ENCODE measurements at regions of chr10 and their contacts with region 1.

Region 1: DNA sequence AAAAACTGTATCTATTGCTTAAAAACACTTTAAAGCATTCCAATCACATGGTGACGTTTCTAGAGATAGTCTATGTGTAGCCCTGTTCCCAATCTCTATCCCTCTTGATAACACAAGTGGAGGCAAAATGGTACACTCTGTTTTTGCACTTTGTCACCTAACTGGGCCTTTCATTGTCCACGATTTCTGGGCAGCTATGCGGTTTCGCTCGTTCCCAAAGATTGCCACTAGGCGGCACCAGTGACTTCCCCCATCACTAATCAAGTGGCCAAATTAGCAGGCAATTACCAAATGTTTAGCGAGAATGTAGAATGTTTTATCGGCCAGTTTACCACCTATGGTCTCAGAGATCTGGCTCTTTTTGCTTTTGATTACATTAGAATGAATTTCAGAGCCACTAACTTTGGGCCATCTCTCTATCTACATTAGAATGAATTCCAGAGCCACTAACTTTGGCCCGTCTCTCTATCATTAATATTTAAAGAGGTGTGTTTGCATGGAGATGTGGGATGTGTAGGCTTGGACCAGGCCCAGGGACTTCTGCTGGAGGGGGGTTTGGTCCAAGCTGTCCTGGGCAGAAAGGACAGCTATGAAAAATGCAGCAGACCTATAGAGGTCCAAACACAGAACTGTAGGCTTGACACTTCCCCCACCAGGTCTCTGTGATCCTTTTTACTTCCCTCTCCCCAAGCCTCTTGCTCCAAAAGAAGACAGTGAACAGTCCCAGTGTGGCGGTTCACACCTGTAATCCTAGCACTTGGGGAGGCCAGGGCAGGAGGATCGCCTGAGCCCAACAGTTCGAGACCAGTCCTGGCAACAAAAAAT is 90.1 kb downstream of the EPC1 start:
- DNase-seq: peak; percentile 85
- H3K4me3 ChIP-seq: peak overlapping the region in 1 of 8 donors; percentile 24
- H3K27ac ChIP-seq: no peak overlapping the region
- H3K4me1 ChIP-seq: peaks cover 0 to 13% (median 9%) of the 10 kb centered on the region in 6 donors
- H3K27me3 ChIP-seq: no peaks in the 10 kb centered on the region
- CTCF ChIP-seq: peak; percentile 77 to 93 (median 88)
- POLR2A ChIP-seq: no peak

Region 2: DNA sequence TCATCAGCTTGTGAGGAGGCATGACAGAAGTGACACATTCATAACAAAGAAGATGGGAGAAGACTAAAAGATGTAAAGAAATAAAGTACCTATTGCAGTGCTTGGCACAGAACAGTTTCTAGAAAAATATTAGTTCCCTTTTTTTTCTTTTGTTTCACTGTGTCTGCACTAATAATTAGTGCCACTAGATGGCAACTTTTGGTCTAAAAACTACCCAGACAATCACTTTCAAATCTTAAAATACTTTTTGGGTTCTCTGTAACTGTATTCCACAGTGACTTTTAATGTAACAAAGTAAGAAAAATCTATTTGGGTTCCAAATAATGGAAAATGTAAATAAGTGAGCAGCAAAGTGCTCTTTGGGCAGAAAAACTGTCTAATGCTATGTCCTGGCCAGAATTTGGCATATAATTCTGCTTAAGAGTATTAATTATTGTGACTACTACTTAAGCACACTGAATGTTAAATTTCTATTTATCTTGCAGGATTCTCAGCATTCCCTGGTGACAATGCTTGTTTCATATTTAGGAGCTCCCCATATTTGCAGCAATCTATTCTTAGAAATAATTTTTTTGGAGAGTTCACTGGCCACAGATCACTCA is 65.8 kb before region 1 on chr10:
- intact Hi-C with region 1: no loop called
- DNase-seq: no peak
- H3K4me3 ChIP-seq: no peak overlapping the region
- H3K27ac ChIP-seq: no peak overlapping the region
- H3K4me1 ChIP-seq: peaks cover 0 to 19% (median 7%) of the 10 kb centered on the region in 6 donors
- H3K27me3 ChIP-seq: no peaks in the 10 kb centered on the region
- CTCF ChIP-seq: peak; percentile 51 to 79 (median 72)
- POLR2A ChIP-seq: no peak

Region 3: GRCh38 chr10:32346134-32346550 is 89.3 kb after region 1 on chr10:
- intact Hi-C with region 1: loop called (anchors 5 kb)
- DNase-seq: peak; percentile 99
- H3K4me3 ChIP-seq: peak overlapping the region; percentile 49 to 87 (median 74)
- H3K27ac ChIP-seq: peak overlapping the region; percentile 98 to 100 (median 100)
- H3K4me1 ChIP-seq: peaks cover 46 to 88% (median 81%) of the 10 kb centered on the region in 6 donors
- H3K27me3 ChIP-seq: no peaks in the 10 kb centered on the region
- CTCF ChIP-seq: peak; percentile 95 to 100 (median 99)
- POLR2A ChIP-seq: peak in 1 of 3 donors; percentile 23

Region 4: GRCh38 chr10:32367793-32368453 is 111.1 kb after region 1 on chr10:
- intact Hi-C with region 1: loop called (anchors 5 kb)
- DNase-seq: no peak
- H3K4me3 ChIP-seq: peak overlapping the region in 1 of 8 donors; percentile 31
- H3K27ac ChIP-seq: peak overlapping the region in 5 of 8 donors; percentile 4 to 48 (median 39)
- H3K4me1 ChIP-seq: peaks cover 13 to 90% (median 42%) of the 10 kb centered on the region in 6 donors
- H3K27me3 ChIP-seq: no peaks in the 10 kb centered on the region
- CTCF ChIP-seq: peak; percentile 48 to 84 (median 74)
- POLR2A ChIP-seq: no peak

Region 5: GRCh38 chr10:33211106-33211878 is 954.5 kb after region 1 on chr10:
- intact Hi-C with region 1: no loop called
- DNase-seq: no peak
- H3K4me3 ChIP-seq: no peak overlapping the region
- H3K27ac ChIP-seq: peak overlapping the region in 7 of 8 donors; percentile 7 to 74 (median 55)
- H3K4me1 ChIP-seq: peaks cover 0 to 30% (median 14%) of the 10 kb centered on the region in 6 donors
- H3K27me3 ChIP-seq: no peaks in the 10 kb centered on the region
- CTCF ChIP-seq: no peak
- POLR2A ChIP-seq: no peak